ENCODE measurements at regions of chr2 and their contacts with region 1.

Region 1: DNA sequence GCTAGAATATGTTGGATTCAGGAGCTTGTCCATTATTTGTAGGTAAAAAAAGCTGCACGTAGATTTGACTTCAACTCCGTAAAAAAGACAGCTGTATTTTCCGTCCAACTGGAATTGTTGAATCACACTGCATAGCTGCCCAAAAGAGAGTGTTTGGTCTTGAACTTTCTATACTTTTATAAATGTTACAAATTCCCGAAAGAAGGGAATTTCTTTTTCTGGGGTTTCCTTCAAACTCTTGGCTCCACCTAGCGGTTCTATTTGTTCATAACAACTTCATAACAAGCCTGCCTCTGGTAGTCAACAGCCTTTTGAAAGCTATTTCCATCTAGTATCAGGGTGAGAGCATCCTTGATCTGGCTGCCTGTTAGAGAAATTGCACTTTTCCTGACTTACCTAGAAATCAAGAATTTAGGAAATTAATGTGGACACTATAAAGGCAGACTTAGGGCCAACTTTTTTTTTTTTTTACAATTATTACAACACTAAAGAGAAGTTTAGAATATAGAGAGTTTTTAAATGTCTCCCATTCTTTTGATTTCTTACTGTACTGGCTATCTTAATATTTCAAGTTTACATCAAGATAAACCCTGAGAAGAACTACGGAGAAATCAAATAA is 48.1 kb downstream of the TMEM185B start:
- DNase-seq: peak in 1 of 2 donors; percentile 35
- H3K4me3 ChIP-seq: no peak overlapping the region
- CTCF ChIP-seq: peak in 1 of 3 donors; percentile 31
- POLR2A ChIP-seq: no peak

Region 2: GRCh38 chr2:119694845-119695521 is 480.1 kb before region 1 on chr2:
- intact Hi-C with region 1: loop called (anchors 5 kb)
- DNase-seq: no peak
- H3K4me3 ChIP-seq: no peak overlapping the region
- CTCF ChIP-seq: no peak
- POLR2A ChIP-seq: no peak